ENCODE measurements at regions of chr19 and their contacts with region 1.

Region 1: GRCh38 chr19:47256688-47257443 is 541 bp downstream of the CCDC9 start:
- DNase-seq: peak; percentile 96 to 99 (median 97)
- ATAC-seq: peak; percentile 89
- H3K4me3 ChIP-seq: peak overlapping the region; percentile 53
- H3K27ac ChIP-seq: peak overlapping the region; percentile 96
- H3K4me1 ChIP-seq: peaks cover 8 to 29% of the 10 kb centered on the region in 2 experiments; a peak in 4 of 5 replicates
- H3K27me3 ChIP-seq: no peaks in the 10 kb centered on the region
- CTCF ChIP-seq: no peak
- EP300 ChIP-seq: no peak; the same call in 1 of the 2 replicates
- POLR2A ChIP-seq: no peak
- RAD21 ChIP-seq: no peak

Region 2: GRCh38 chr19:47267350-47267759 is 10.5 kb after region 1 on chr19:
- CTCF ChIA-PET with region 1: no interaction called
- POLR2A ChIA-PET with region 1: interaction called, 19 read pairs
- in situ Hi-C with region 1: no loop called
- intact Hi-C with region 1: no loop called
- DNase-seq: no peak
- ATAC-seq: no peak
- H3K4me3 ChIP-seq: no peak overlapping the region
- H3K27ac ChIP-seq: no peak overlapping the region
- H3K4me1 ChIP-seq: peaks cover 6 to 27% of the 10 kb centered on the region in 2 experiments; a peak in 3 of 5 replicates
- H3K27me3 ChIP-seq: no peaks in the 10 kb centered on the region
- CTCF ChIP-seq: no peak
- EP300 ChIP-seq: no peak
- POLR2A ChIP-seq: no peak
- RAD21 ChIP-seq: no peak

Region 3: DNA sequence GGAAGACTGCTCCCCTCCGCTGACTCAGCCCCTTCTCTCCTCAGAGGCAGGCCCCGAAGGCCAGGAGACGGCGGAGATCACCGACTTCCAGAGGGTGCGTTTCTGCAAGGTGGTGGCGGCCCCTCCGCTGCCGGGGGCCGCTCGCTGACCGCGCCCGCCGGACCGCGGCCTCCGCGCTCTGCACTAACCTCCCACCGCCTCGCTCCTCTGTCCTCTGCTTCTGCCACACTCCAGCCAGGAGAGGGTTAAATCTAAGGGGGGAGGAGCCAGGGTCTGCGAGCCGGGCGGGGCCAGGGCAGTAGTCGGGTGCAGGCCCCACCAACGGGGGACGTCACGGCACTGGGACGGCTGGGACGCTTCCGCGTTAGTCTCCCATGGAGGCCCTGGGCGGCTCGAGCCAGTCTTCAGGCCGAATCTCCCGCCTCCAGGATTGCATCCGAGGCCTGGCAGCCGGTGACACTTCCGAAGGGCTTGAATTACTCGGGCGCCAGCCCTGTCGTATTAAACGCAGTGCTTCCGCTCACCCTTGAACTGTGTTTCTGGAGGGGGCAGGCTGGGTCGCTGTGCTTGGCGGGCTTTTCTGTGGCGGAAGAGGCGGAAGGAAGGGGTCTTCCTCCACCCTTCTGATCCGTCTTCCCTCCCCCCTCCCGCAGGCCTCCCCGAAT is 16.6 kb after region 1 on chr19:
- CTCF ChIA-PET with region 1: no interaction called
- POLR2A ChIA-PET with region 1: interaction called, 19 read pairs
- in situ Hi-C with region 1: no loop called
- intact Hi-C with region 1: loop called (anchors 1 kb)
- DNase-seq: peak; percentile 85 to 97 (median 89)
- ATAC-seq: peak; percentile 85
- H3K4me3 ChIP-seq: peak overlapping the region; percentile 74
- H3K27ac ChIP-seq: peak overlapping the region; percentile 95
- H3K4me1 ChIP-seq: peaks cover 33 to 67% of the 10 kb centered on the region in 2 experiments
- H3K27me3 ChIP-seq: no peaks in the 10 kb centered on the region
- CTCF ChIP-seq: no peak
- EP300 ChIP-seq: no peak
- POLR2A ChIP-seq: peak; percentile 92
- RAD21 ChIP-seq: no peak

Measured in K562 (cell line).